ENCODE measurements at regions of chr9 and their contacts with region 1.

Region 1: DNA sequence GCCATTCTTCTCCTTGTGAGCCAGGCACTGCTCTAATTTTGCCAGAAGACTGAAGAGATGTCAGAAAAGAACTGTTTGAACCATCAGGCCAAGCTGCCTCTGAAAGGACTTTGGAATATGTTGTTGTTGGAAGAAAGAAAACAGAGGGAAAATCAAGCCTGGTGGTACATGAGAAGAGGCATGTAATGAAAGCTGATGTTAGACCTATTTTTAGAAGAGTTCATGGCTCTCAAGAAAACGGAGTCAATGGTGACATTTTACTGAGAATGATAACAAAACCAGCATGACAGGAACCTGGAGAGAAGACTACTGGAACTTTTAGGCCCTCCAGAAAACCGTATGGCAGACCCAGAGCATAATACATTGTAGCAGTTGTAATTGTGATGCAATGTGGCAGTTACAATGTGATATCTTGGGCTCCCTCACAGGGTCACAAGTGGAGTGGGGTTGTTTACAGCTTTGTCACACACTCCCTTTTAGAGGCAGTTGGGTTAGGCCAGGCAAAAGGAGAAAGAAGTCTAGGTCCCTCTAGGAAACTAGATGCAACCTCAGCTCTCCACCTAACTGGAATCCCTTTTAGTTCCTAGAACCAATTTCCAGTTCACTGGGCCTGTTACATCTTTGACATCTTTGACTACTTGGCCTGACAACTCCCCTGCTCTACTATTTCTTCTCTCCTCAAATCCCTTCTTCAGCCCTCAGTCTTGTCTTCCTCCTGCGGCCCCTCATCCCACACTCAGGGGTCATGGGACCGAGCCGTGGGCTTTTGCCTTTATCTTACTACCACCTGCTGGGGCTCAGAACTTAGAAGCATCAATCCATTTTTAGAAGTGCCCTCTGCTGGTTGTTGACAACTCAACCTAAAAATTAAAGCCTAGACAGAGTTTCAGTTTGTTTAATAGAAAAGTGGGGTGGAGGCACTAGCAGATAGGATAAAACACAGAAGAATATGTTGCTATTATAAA is 61.2 kb upstream of the JAK2 start:
- DNase-seq: peak; percentile 50
- ATAC-seq: peak; percentile 70
- H3K4me3 Mint-ChIP-seq: no peak overlapping the region
- H3K27ac Mint-ChIP-seq: peak overlapping the region; percentile 47
- H3K4me1 Mint-ChIP-seq: peaks cover 15% of the 10 kb centered on the region
- H3K27me3 Mint-ChIP-seq: no peaks in the 10 kb centered on the region

Region 2: GRCh38 chr9:4792572-4793458 is 131.0 kb before region 1 on chr9 and contains the start of gene RCL1:
- CTCF ChIA-PET with region 1: interaction called, 10 read pairs
- POLR2A ChIA-PET with region 1: no interaction called
- DNase-seq: peak; percentile 97
- ATAC-seq: peak; percentile 98
- H3K4me3 Mint-ChIP-seq: peak within 1 kb of the TSS; percentile 95
- H3K27ac Mint-ChIP-seq: peak within 1 kb of the TSS; percentile 94
- H3K4me1 Mint-ChIP-seq: peaks cover 33% of the 10 kb centered on the region
- H3K27me3 Mint-ChIP-seq: peaks cover 9% of the 10 kb centered on the region
- total RNA-seq, gene RCL1: 16.8 TPM

Region 3: DNA sequence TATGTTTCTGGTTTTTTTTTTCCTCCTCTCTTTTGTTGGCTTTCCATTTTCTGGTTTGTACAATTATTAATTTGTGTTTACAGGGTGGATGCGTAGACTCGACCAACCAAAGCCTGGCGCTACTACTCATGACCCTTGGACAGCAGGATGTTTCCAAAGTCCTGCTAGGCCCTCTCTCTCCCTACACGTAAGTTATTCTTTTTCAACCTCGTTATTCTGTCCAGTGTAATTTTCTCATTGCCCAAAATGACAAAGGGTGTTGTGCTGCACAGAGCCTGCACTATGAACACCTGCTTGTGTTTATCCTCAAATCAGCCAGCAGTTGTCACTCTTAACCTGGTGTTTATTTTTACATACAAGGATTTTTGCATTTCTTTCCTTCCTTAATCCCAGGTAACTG is 74.5 kb before region 1 on chr9:
- CTCF ChIA-PET with region 1: interaction called, 26 read pairs
- POLR2A ChIA-PET with region 1: no interaction called
- DNase-seq: no peak
- ATAC-seq: no peak
- H3K4me3 Mint-ChIP-seq: no peak overlapping the region
- H3K27ac Mint-ChIP-seq: no peak overlapping the region
- H3K4me1 Mint-ChIP-seq: peaks cover 3% of the 10 kb centered on the region
- H3K27me3 Mint-ChIP-seq: no peaks in the 10 kb centered on the region

Region 4: GRCh38 chr9:4873066-4873465 is 50.8 kb before region 1 on chr9:
- CTCF ChIA-PET with region 1: no interaction called
- POLR2A ChIA-PET with region 1: no interaction called
- DNase-seq: no peak
- ATAC-seq: no peak
- H3K4me3 Mint-ChIP-seq: no peak overlapping the region
- H3K27ac Mint-ChIP-seq: no peak overlapping the region
- H3K4me1 Mint-ChIP-seq: no peaks in the 10 kb centered on the region
- H3K27me3 Mint-ChIP-seq: no peaks in the 10 kb centered on the region

Region 5: DNA sequence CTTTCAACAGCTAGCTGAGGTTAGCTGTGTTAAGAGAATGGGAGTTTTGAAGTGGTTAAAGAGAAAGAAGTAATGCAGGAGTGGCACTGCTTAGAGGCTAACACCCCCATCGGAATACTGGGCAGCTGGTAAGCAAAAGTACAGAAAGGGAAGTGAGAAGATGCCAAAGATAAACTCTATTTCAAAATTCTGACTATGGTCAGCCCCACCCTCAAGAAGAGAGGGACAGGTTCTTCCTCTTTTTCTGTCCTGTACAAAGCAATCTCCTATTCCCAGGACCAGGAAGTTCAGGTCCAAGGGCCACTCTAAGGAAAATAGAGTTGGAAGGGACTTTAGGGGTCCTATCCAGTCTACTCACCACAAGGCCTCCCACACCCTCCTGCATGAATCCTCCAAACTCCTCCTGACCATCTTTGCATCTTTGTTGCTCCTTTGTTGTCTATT is 15.3 kb after region 1 on chr9:
- CTCF ChIA-PET with region 1: interaction called, 19 read pairs
- POLR2A ChIA-PET with region 1: interaction called, 7 read pairs
- DNase-seq: peak; percentile 37
- ATAC-seq: peak; percentile 88
- H3K4me3 Mint-ChIP-seq: peak overlapping the region; percentile 47
- H3K27ac Mint-ChIP-seq: peak overlapping the region; percentile 56
- H3K4me1 Mint-ChIP-seq: peaks cover 79% of the 10 kb centered on the region
- H3K27me3 Mint-ChIP-seq: no peaks in the 10 kb centered on the region

Measured in activated CD8-positive, alpha-beta T cell treated with anti-CD3 and anti-CD28 coated beads, Interleukin-2, amount 10 ng/mL, durations not matched to agents 7 days and 5 days (primary cell).